ENCODE measurements at regions of chr1 and their contacts with region 1.

Region 1: DNA sequence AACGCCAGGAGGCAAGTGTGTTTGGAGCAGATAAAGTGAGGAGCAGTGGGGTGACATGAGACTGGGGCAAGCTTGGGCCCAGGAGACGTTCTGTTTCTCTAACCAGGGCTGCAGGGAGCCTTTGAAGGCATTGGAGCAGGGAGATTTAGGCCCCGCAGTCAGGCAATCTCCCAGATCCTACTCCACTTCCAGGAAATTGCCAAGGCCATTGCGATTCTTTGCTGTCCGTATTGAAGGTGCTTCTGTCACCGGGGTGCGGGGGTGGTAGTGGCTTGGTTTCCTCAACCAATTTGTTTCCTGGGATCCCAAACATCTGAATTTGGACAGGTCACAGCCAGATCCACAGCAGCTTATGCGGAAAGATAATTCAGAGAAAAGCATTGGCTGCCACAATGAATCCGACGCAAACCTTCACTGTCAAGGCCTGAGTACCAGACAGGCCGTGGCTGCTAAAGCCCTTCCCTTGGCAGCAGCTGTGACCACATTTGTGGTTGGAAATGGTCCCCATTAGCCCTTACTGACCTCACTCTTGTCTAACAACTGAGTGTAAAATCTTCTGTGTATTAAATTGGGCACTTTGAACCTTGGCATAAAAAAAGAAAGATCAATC is 385.6 kb downstream of the PTPRU start:
- DNase-seq: no peak
- H3K4me3 ChIP-seq: no peak overlapping the region
- H3K27ac ChIP-seq: no peak overlapping the region
- H3K4me1 ChIP-seq: no peaks in the 10 kb centered on the region
- H3K27me3 ChIP-seq: no peaks in the 10 kb centered on the region
- CTCF ChIP-seq: no peak

Region 2: GRCh38 chr1:29002792-29003191 is 619.1 kb before region 1 on chr1:
- CTCF ChIA-PET with region 1: interaction called, 13 read pairs
- POLR2A ChIA-PET with region 1: no interaction called
- intact Hi-C with region 1: no loop called
- DNase-seq: peak in 1 of 2 experiments; percentile 81
- H3K4me3 ChIP-seq: no peak overlapping the region
- H3K27ac ChIP-seq: peak overlapping the region; percentile 54
- H3K4me1 ChIP-seq: peaks cover 18% of the 10 kb centered on the region
- H3K27me3 ChIP-seq: no peaks in the 10 kb centered on the region
- CTCF ChIP-seq: no peak

Measured in PC-9 (cell line).